Right ventricle myocardium inferior (tissue), 1 donor: ENCODE measurements at regions of chr11 and their contacts with region 1.

Region 1: DNA sequence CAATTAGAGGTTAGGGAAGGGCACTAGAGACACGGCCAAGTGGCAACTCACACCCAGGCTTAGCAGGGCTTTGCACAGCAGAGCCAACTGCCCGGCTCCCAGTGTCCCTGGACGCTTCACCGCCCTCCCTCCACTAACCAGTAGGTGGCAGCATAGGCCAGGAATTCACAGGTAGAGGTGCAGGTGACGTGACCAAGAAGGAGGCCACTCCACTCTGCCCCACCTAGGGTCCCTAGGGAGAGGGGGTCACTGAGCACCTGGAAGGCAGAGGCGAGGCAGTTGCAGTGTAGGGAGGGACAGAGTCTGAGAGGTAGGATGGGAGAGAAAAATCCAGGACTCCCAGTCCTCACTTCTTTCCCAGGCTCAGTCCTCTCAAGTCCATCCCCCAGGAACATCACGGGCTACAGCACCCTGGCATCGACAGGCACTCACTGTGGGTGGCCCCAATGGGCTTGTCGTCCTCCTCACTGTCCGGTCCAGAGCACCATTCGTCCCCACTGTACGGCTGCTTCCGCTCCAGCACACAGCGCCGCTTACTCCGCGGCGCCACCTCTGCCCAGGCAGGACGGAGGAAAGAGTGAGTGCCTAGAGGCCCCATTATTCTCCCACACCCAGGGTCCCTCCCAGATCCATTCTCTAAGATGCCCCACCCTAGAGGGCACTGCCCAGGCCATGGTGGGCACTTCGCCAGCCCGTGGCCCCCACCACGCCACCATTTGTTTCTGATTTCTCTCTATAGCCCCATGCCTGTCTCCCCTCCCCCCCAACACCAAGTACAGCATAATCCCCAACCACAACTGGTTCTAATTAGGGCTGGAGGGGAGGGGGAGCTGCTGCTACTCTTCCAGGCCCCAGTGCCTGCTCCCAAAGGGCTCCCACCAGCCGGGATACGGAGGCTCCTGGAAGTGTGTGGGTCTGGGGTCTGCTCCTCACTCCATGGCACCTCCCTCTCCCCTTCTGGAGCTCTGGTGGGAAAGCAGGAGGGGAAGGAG is 18.4 kb downstream of the BCL9L start:
- DNase-seq: peak; percentile 90
- ATAC-seq: peak; percentile 40

Region 2: GRCh38 chr11:118304568-118305248 is 602.6 kb before region 1 on chr11 and contains the start of gene CD3E:
- intact Hi-C with region 1: no loop called
- DNase-seq: no peak
- ATAC-seq: no peak
- total RNA-seq, gene CD3E: 0.70 TPM

Region 3: DNA sequence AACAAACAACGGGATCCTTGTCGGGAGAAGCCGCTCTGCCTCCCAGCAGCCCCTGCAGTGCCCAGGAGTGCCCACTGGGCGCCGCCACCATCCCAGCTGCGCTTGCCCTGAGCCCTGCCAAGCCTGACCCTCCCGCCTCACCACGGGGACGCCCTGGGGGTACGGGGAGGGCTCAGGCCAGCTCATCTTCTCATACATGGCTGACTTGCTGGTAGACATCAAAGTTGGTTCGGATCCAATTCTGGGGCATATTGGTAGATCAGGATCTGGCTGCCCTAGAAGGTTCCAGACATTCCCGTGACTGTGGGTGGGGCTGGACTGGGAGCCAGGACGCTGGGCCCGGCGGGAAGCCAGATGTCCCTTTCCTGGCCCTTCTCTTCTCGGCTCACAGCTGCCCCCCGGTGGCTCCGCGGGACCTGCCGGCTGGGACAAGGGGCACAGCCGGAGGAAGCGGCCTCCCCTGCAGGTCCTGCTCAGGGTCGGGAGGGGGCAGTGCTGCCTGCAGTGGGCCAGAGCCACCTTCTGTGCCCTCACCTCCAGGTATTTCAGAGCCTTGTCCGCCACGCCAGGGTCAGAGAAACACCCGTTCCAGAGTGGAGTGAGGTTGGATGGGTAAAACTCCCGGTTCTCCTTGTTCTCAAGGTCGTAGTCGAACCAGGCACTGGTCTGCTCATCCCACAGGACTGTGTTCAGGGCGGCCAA is 217.3 kb before region 1 on chr11:
- intact Hi-C with region 1: loop called (anchors 10 kb)
- DNase-seq: peak; percentile 97
- ATAC-seq: peak; percentile 97

Region 4: DNA sequence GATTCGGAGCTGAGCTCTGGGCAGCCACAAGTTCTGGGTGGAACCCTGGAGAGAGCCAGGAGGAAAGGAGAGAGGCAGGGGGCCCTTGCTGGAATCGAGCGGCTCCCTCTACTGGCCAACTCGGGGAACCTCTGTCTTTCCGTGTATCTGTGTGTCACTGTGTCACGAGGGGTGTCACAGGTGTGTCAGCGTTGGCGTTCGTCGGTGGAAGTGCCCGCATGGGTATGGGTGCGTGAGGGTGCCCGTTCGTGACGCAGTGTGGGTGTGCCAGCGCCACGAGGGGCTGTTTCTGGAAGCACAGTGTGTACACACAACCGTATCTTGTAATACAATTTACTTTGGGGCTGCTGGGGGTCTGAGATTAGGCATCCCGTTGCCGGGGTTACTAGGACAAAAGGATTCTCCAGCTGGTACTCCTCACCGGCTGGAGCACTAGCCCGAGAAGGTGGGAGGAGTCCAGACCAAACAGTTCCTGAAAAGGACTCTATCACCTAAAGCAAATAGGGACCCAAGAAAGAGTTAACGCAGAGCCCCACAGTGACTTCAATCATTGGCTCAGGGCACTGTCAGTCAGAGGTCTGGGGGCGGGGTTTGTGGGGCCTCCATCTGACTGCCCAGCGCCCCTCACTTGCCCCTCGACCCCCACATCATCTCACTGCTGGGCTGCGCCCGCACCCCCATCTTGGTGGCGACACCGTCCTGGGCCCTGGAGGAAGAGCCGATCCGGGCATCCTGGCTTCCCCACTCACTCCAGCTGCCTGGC is 20.9 kb after region 1 on chr11:
- intact Hi-C with region 1: loop called (anchors 1 kb)
- DNase-seq: peak; percentile 86
- ATAC-seq: peak; percentile 77

Region 5: DNA sequence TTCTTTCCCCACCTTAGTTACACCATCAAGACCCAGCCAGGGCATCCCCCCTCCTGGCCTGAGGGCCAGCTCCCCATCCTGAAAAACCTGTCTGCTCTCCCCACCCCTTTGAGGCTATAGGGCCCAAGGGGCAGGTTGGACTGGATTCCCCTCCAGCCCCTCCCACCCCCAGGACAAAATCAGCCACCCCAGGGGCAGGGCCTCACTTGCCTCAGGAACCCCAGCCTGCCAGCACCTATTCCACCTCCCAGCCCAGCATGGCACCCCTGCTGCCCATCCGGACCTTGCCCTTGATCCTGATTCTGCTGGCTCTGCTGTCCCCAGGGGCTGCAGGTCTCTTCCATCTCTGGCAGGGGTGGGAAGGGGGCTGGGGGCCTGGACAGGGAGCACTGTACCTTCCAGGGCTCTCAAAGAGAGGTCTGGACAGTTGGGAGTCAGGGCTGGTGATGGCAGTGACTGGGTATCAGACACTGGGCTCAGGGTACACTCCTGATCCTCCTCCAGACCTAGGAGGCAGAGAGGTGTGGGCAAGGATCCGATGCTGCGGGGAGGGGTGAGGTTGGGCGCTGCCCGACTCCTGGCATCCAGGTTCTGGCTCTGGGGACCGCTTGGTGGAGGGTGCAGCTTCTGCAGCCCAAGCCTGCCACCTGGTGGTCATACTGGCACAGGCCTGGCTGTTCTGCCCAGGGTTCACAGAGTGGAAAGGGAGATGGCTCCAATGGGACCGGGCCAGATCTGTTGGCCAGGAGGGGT is 48.9 kb after region 1 on chr11 and contains the start of gene UPK2:
- intact Hi-C with region 1: loop called (anchors 1 kb)
- DNase-seq: peak; percentile 92
- ATAC-seq: peak; percentile 95
- total RNA-seq, gene UPK2: not detected